Left ventricle myocardium superior (tissue), 1 donor: ENCODE measurements at regions of chr12 and their contacts with region 1.

Region 1: DNA sequence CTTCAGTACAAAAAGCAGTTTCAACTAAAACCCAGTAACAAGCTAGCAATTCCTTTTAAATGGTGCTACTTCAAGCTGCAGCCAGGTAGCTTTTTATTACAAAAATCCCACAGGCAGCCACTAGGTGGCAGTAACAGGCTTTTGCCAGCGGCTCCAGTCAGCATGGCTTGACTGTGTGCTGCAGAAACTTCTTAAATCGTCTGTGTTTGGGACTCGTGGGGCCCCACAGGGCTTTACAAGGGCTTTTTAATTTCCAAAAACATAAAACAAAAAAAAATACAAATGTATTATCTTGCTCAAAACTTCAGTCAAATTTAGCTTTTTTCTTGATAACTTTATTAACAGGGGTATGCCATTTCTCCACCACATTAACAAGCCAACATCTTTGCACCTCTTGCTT is 3.6 kb upstream of the CLEC4E start:
- DNase-seq: peak; percentile 52
- ATAC-seq: peak; percentile 73

Region 2: DNA sequence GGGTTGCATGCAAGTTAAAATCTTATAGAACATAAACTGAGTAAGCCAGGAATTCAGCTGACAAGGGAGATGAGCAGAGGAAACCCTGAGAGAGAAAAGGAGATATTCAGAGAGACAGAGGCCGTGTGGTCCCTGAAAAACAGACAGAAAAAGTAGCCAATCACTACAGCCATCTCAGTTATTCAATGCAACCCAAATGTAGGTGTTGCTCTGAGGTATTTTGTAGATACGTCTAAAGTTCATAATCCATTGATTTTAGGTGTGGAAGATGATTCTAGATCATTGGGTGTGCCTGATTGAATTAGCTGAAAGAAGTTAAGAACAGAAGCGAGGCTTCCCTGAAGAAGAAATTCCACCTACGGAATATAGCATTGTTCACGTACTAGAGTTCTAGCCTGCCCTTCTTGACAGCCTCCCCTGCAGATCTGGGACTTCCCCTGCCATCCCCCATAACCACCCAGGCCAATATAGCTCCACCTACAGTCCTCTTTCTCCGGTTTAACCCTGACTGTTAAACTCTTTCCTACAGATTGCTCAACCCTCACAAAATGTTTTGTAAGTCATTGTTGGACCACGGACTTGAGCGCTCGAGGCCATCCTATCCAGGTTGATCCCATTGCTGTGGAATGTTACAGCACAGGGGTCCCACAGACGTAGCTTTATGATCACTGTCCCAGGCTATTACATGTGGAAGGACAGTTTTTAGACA is 46.7 kb after region 1 on chr12:
- intact Hi-C with region 1: no loop called
- DNase-seq: no peak
- ATAC-seq: no peak

Region 3: DNA sequence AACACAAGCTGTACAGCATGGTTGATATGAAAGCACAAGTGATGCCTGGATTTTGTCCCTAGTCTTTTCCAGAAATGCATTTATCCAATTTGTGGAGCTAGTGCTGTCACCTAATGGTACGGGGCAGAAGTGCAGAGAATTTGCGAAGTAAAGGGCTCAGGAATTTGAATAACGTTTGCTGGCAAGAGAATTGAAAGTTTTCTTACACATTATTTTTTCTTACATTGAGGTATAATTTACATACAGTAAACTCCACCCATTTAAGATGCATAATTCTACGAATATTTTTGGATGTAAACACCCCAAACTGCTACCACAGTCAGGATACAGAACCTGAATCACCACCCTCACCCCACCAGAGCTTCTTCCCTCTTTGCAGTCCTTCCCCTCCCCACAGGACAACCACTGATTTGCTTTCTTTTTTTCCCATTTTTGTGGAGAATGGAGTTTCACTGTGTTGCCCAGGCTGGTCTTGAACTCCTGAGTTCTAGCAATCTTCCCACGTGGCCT is 64.8 kb after region 1 on chr12:
- intact Hi-C with region 1: loop called (anchors 5 kb)
- DNase-seq: no peak
- ATAC-seq: peak; percentile 39

Region 4: GRCh38 chr12:8742501-8742900 is 198.2 kb after region 1 on chr12:
- intact Hi-C with region 1: no loop called
- DNase-seq: no peak
- ATAC-seq: no peak